Prostate gland (tissue), 2 donors: ENCODE measurements at regions of chr18 and their contacts with region 1.

Region 1: DNA sequence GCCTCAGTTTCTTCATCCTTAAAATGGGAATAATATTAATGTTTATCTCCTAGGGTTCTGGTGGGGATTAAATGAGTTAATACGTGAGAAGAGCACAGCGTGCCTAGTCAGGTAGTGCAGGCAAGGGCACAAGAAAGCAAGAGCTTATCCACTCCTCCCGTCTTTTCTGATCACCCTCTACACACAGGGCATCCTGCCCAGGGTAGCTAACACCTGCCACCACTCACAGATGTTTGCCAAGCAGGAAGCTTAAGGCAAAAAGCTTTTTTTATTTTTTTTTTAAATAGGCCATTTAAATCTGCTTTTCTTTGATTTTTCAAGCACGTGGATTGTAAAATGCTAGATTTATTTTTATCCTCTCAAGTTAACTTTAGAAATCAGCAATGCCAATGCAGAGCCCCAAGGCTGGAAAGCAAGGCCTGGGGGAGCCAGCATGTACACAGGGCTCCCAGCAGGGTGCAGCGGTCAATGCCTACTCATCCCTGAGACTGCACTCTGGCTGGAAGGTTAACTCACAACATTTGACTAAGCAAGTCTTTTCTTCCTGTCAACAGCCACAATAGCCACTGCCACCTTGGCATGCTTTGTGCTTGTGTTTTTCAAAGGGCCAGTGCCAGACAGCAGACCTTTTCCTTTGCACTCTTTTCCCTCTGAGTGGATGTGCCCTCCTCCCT is 86.5 kb upstream of the ACAA2 start:
- DNase-seq: no peak
- H3K4me3 ChIP-seq: no peak overlapping the region
- H3K27ac ChIP-seq: no peak overlapping the region
- H3K4me1 ChIP-seq: no peaks in the 10 kb centered on the region
- H3K27me3 ChIP-seq: no peaks in the 10 kb centered on the region
- CTCF ChIP-seq: no peak
- POLR2A ChIP-seq: no peak

Region 2: GRCh38 chr18:49967171-49967570 is 67.4 kb after region 1 on chr18:
- intact Hi-C with region 1: loop called (anchors 10 kb)
- DNase-seq: no peak
- H3K4me3 ChIP-seq: no peak overlapping the region
- H3K27ac ChIP-seq: peak overlapping the region; percentile 46 to 51
- H3K4me1 ChIP-seq: peaks cover 3% of the 10 kb centered on the region
- H3K27me3 ChIP-seq: no peaks in the 10 kb centered on the region
- CTCF ChIP-seq: no peak
- POLR2A ChIP-seq: no peak

Region 3: GRCh38 chr18:50151926-50152325 is 252.1 kb after region 1 on chr18:
- intact Hi-C with region 1: no loop called
- DNase-seq: no peak
- H3K4me3 ChIP-seq: no peak overlapping the region
- H3K27ac ChIP-seq: no peak overlapping the region
- H3K4me1 ChIP-seq: no peaks in the 10 kb centered on the region
- H3K27me3 ChIP-seq: no peaks in the 10 kb centered on the region
- CTCF ChIP-seq: no peak
- POLR2A ChIP-seq: no peak

Region 4: GRCh38 chr18:50297621-50298442 is 398.0 kb after region 1 on chr18:
- intact Hi-C with region 1: no loop called
- DNase-seq: no peak
- H3K4me3 ChIP-seq: peak overlapping the region; percentile 31 to 35
- H3K27ac ChIP-seq: no peak overlapping the region
- H3K4me1 ChIP-seq: no peaks in the 10 kb centered on the region
- H3K27me3 ChIP-seq: no peaks in the 10 kb centered on the region
- CTCF ChIP-seq: no peak
- POLR2A ChIP-seq: no peak